Activated naive CD4-positive, alpha-beta T cell treated with anti-CD3 and anti-CD28 coated beads, Interleukin-2, amount 10 ng/mL, durations not matched to agents 7 days and 5 days (primary cell): ENCODE measurements at regions of chr17 and their contacts with region 1.

Region 1: DNA sequence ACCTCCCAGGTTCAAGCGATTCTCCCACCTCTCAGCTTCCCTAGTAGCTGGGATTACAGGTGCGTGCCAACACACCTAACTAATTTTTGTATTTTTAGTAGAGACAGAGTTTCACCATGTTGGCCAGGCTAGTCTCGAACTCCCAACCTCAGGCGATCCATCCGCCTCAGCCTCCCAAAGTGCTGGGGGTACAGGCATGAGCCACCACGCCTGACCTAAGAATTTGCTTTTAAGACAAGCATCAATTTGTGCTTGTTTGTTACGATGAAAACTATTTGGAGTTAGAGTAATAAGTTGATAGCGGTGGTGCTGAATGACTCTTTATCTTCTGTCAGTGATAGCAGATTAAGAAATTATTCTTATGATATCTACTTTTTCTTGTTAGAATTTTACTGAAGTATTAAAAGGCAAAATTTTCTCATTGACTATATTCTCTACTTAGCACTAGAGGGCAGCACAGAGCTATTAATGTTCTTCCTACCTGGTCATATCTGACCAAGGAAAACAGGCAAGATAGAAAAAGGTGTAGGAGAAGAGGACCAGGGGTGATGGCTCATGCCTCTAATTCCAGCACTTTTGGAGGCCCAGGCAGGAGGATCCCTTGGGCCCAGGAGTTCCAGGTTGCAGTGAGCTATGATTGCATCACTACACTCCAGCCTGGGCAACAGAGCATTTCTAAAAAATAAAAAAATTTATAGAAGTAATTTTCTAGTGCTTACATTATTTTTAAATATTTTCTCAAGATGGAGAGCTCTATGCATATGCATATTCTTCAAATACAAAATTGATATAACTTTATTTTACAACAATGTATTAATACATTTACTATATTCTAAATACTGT is 24.5 kb downstream of the STXBP4 start:
- DNase-seq: no peak
- H3K4me3 Mint-ChIP-seq: no peak overlapping the region
- H3K27ac Mint-ChIP-seq: no peak overlapping the region
- H3K4me1 Mint-ChIP-seq: no peaks in the 10 kb centered on the region
- H3K27me3 Mint-ChIP-seq: no peaks in the 10 kb centered on the region

Region 2: GRCh38 chr17:54932711-54933110 is 60.3 kb before region 1 on chr17:
- CTCF ChIA-PET with region 1: no interaction called
- DNase-seq: no peak
- H3K4me3 Mint-ChIP-seq: no peak overlapping the region
- H3K27ac Mint-ChIP-seq: no peak overlapping the region
- H3K4me1 Mint-ChIP-seq: no peaks in the 10 kb centered on the region
- H3K27me3 Mint-ChIP-seq: no peaks in the 10 kb centered on the region

Region 3: GRCh38 chr17:55295411-55296170 is 302.6 kb after region 1 on chr17:
- CTCF ChIA-PET with region 1: interaction called, 21 read pairs
- DNase-seq: peak; percentile 60
- H3K4me3 Mint-ChIP-seq: no peak overlapping the region
- H3K27ac Mint-ChIP-seq: no peak overlapping the region
- H3K4me1 Mint-ChIP-seq: no peaks in the 10 kb centered on the region
- H3K27me3 Mint-ChIP-seq: peaks cover 17% of the 10 kb centered on the region

Region 4: DNA sequence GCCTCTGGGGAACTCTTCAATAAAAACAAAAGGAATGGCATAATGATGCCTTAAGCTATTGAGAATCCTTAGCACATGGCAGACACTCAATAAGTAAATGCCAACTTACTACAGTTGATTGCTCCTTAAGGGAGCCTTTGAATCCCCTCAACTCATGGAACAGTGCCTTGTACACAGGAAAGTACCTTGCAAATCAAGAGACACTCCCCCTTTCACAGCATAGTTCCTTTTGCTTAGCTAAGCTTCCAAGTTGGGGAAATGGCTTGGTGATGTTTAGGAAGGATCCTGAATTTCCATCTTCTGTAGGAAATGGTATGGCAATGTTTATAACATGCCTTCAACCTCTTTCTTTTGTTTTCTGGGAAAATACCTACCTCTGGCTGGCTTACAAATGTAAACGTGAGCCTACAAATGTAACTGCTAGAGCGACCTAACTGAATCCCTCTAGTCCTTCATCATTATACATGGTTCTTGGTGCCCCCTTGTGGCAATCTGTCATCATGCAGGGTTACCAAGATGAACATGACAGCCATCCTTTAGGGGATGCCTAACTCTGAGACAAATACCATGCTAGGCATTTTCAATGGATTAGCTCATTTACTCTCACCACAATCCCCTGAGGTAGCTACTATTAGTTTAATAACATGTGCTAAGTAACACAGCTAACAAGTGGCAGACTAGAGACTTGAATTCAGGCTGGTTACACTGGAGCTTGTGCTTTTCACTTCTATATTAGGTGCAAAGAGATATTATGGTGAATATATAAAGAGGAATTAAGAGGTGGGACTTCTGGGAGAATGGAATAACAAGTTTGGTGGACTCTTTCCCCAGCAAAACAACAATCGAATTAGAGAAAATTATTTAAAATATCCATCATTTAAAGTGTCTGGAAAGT is 363.7 kb after region 1 on chr17:
- CTCF ChIA-PET with region 1: interaction called, 60 read pairs
- DNase-seq: peak; percentile 85
- H3K4me3 Mint-ChIP-seq: no peak overlapping the region
- H3K27ac Mint-ChIP-seq: no peak overlapping the region
- H3K4me1 Mint-ChIP-seq: no peaks in the 10 kb centered on the region
- H3K27me3 Mint-ChIP-seq: peaks cover 20% of the 10 kb centered on the region

Region 5: DNA sequence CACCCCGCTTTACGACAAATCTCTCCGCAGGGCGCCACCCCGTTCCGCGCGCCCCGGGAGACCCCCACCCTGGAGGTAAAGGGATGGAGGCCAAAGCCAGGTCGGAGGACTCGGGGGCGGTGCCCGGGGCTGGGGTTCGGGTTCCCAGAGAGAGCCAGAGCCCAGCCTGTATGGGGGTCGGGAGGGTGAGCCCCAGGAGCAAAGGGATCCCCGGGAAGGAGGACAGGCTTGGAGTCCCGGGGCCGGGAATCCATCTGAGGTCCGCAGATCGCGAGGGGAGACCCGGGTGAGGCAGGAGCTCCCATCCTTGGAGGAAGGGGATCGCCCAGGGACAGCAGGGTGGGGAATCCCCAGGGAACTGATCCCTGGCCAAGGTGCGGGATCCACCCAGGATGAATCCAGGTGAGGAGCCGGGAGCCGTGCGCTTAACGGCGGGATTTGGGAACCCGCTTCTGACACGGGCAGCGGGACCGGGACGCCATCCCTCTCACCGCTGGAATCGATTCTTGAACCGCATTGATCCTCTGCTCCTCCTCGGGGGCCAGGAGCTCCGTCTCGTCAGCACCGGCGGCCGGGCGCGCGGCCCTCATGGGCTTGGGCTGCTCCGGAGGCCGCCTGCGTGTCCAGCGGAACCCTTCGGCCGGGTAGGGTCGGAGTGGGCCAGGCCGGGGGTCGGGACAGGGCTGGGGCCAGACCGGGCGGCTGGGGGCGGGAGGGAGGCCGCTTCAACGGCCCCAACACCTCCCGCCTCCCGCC is 428.3 kb after region 1 on chr17 and contains the start of gene MMD:
- CTCF ChIA-PET with region 1: no interaction called
- DNase-seq: peak; percentile 43
- H3K4me3 Mint-ChIP-seq: peak within 1 kb of the TSS; percentile 92
- H3K27ac Mint-ChIP-seq: peak within 1 kb of the TSS; percentile 99
- H3K4me1 Mint-ChIP-seq: peaks cover 49% of the 10 kb centered on the region
- H3K27me3 Mint-ChIP-seq: peaks cover 42% of the 10 kb centered on the region